ENCODE measurements at regions of chr17 and their contacts with region 1.

Region 1: GRCh38 chr17:78313735-78314648 is 45.9 kb downstream of the SOCS3 start:
- DNase-seq: peak; percentile 65
- ATAC-seq: peak; percentile 78
- H3K4me3 Mint-ChIP-seq: peak overlapping the region; percentile 66
- H3K27ac Mint-ChIP-seq: peak overlapping the region; percentile 24
- H3K4me1 Mint-ChIP-seq: peaks cover 43% of the 10 kb centered on the region
- H3K27me3 Mint-ChIP-seq: peaks cover 6% of the 10 kb centered on the region
- CTCF ChIP-seq: no peak

Region 2: GRCh38 chr17:77942112-77942988 is 371.6 kb before region 1 on chr17:
- CTCF ChIA-PET with region 1: no interaction called
- POLR2A ChIA-PET with region 1: no interaction called
- intact Hi-C with region 1: no loop called
- DNase-seq: no peak
- ATAC-seq: no peak
- H3K4me3 Mint-ChIP-seq: no peak overlapping the region
- H3K27ac Mint-ChIP-seq: no peak overlapping the region
- H3K4me1 Mint-ChIP-seq: no peaks in the 10 kb centered on the region
- H3K27me3 Mint-ChIP-seq: peaks cover 39% of the 10 kb centered on the region
- CTCF ChIP-seq: no peak

Region 3: DNA sequence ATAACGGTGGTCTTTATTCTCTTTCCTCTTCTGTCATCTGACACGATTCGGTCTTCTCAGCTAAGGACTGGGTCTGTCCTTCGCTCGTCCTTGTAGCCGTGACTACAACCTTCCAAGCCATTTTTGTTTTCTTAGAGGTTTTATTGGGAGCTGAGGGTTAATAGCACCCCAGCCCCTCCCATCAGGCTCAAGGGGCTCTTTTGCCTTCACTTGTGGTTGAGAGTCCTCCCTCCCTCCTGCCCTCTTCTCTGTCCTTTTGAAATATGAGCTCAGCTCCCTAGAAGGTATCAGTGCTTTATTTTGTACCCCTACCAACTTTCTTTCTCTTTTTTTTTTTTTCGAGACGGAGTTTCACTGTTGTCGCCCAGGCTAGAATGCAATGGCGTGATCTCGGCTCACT is 21.2 kb after region 1 on chr17:
- CTCF ChIA-PET with region 1: no interaction called
- POLR2A ChIA-PET with region 1: interaction called, 21 read pairs
- intact Hi-C with region 1: loop called (anchors 1 kb)
- DNase-seq: no peak
- ATAC-seq: no peak
- H3K4me3 Mint-ChIP-seq: no peak overlapping the region
- H3K27ac Mint-ChIP-seq: peak overlapping the region; percentile 1
- H3K4me1 Mint-ChIP-seq: peaks cover 60% of the 10 kb centered on the region
- H3K27me3 Mint-ChIP-seq: no peaks in the 10 kb centered on the region
- CTCF ChIP-seq: no peak